ENCODE measurements at regions of chr3 and their contacts with region 1.

Region 1: DNA sequence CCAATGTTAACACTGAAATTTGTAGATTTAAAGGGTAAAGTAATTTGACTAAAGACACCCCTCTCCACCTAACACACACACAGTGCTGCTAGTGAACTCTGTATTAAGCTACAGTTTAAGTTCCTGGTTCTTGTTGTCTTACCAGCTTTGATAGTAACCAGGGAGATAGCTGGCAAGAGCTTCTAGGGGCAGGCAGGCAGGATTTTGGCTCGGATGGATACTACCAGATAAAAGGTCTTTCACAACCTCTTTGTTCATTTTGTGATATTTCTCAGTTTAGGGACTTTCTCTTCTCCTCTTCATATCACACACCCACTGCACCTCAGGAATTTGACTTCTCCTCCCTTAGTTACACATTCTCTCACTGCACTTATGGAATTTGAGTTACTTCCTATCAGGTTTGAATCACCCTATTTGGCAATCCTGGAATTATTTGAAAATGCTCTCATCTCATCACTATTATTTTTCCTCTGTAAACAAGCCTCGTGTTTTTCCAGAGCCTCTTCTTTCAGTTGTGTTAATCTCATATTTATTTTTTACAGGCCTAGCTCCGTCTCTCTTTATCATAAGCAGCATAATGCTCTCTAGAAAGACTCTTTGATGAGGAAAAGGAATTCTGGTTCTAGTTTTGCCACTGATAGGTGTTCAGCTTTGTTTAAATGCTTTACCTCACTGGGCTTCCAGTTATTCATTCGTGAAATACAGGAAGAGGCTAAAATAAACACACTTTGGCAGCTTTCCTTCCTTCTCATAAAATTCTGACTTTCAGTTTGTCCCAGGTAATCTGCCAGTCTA is 23.0 kb upstream of the CLDN1 start:
- DNase-seq: peak; percentile 52 to 57
- H3K4me3 ChIP-seq: no peak overlapping the region
- H3K4me3 Mint-ChIP-seq: peak overlapping the region; percentile 50
- H3K27ac Mint-ChIP-seq: peak overlapping the region; percentile 95
- H3K4me1 ChIP-seq: peaks cover 36% of the 10 kb centered on the region
- H3K4me1 Mint-ChIP-seq: peaks cover 35% of the 10 kb centered on the region
- H3K27me3 ChIP-seq: no peaks in the 10 kb centered on the region
- H3K27me3 Mint-ChIP-seq: no peaks in the 10 kb centered on the region
- CTCF ChIP-seq: no peak

Region 2: GRCh38 chr3:190330936-190331734 is 14.1 kb before region 1 on chr3:
- CTCF ChIA-PET with region 1: no interaction called
- POLR2A ChIA-PET with region 1: no interaction called
- intact Hi-C with region 1: loop called (anchors 2 kb)
- DNase-seq: peak in 1 of 2 experiments; percentile 21
- H3K4me3 ChIP-seq: no peak overlapping the region
- H3K4me3 Mint-ChIP-seq: no peak overlapping the region
- H3K27ac Mint-ChIP-seq: no peak overlapping the region
- H3K4me1 ChIP-seq: peaks cover 20% of the 10 kb centered on the region
- H3K4me1 Mint-ChIP-seq: peaks cover 13% of the 10 kb centered on the region
- H3K27me3 ChIP-seq: no peaks in the 10 kb centered on the region
- H3K27me3 Mint-ChIP-seq: no peaks in the 10 kb centered on the region
- CTCF ChIP-seq: no peak

Region 3: GRCh38 chr3:190375246-190375645 is 30.0 kb after region 1 on chr3:
- CTCF ChIA-PET with region 1: interaction called, 4 read pairs
- POLR2A ChIA-PET with region 1: no interaction called
- intact Hi-C with region 1: loop called (anchors 2 kb)
- DNase-seq: no peak
- H3K4me3 ChIP-seq: no peak overlapping the region
- H3K4me3 Mint-ChIP-seq: no peak overlapping the region
- H3K27ac Mint-ChIP-seq: peak overlapping the region; percentile 4
- H3K4me1 ChIP-seq: peaks cover 40% of the 10 kb centered on the region
- H3K4me1 Mint-ChIP-seq: peaks cover 30% of the 10 kb centered on the region
- H3K27me3 ChIP-seq: no peaks in the 10 kb centered on the region
- H3K27me3 Mint-ChIP-seq: no peaks in the 10 kb centered on the region
- CTCF ChIP-seq: no peak

Region 4: GRCh38 chr3:190424478-190425439 is 79.5 kb after region 1 on chr3:
- CTCF ChIA-PET with region 1: no interaction called
- POLR2A ChIA-PET with region 1: no interaction called
- intact Hi-C with region 1: no loop called
- DNase-seq: peak; percentile 75 to 76
- H3K4me3 ChIP-seq: no peak overlapping the region
- H3K4me3 Mint-ChIP-seq: no peak overlapping the region
- H3K27ac Mint-ChIP-seq: no peak overlapping the region
- H3K4me1 ChIP-seq: no peaks in the 10 kb centered on the region
- H3K4me1 Mint-ChIP-seq: no peaks in the 10 kb centered on the region
- H3K27me3 ChIP-seq: no peaks in the 10 kb centered on the region
- H3K27me3 Mint-ChIP-seq: peaks cover 2% of the 10 kb centered on the region
- CTCF ChIP-seq: peak; percentile 57 to 66

Region 5: GRCh38 chr3:190585805-190586630 is 240.8 kb after region 1 on chr3:
- CTCF ChIA-PET with region 1: no interaction called
- POLR2A ChIA-PET with region 1: no interaction called
- intact Hi-C with region 1: no loop called
- DNase-seq: peak; percentile 24 to 54
- H3K4me3 ChIP-seq: no peak overlapping the region
- H3K4me3 Mint-ChIP-seq: no peak overlapping the region
- H3K27ac Mint-ChIP-seq: no peak overlapping the region
- H3K4me1 ChIP-seq: no peaks in the 10 kb centered on the region
- H3K4me1 Mint-ChIP-seq: peaks cover 10% of the 10 kb centered on the region
- H3K27me3 ChIP-seq: no peaks in the 10 kb centered on the region
- H3K27me3 Mint-ChIP-seq: no peaks in the 10 kb centered on the region
- CTCF ChIP-seq: no peak

Measured in Caco-2 (cell line).